ENCODE measurements at regions of chr1 and their contacts with region 1.

Region 1: DNA sequence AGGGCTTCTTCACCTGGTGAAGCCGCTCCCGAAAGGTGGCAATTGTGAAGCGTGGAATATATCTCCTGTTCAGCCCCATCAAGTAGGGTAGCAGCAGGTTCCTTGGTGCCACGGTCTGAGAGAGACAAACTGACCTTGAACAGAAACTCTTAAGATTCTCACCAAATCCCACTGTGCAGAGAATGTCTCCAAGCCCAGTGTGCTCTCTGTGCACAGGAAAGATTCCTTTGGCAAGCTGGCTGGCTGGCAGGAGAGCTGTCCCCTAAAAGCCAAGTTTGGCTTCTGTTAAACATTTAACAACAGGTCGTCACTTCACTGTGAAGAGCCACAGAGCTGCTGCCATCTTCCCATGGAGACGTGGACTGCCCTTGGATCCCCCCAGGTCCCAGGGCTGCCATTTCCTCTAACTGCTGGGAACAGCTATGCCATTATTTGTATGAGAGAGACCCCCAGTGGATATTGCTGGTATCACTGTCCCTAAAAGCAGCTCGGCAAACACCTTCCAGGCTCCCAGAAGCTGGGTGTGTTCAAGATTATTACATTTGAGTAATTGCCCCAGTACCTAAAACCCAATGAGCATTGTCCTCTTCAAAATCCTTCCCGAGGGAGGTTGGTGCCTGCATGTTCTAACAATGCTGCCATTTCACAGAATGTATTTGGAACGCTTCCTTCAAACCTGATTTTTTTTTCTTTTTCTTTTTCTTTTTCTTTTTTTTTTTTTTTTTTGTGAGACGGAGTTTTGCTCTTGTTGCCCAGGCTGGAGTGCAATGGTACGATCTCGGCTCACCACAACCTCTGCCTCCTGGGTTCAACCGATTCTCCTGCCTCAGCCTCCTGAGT is 71.8 kb downstream of the CD58 start:
- DNase-seq: peak; percentile 78
- ATAC-seq: peak; percentile 94
- H3K4me3 ChIP-seq: no peak overlapping the region
- H3K27ac ChIP-seq: no peak overlapping the region
- H3K4me1 ChIP-seq: peaks cover 18% of the 10 kb centered on the region
- H3K27me3 ChIP-seq: no peaks in the 10 kb centered on the region
- CTCF ChIP-seq: peak; percentile 92

Region 2: GRCh38 chr1:116139592-116140134 is 359.3 kb before region 1 on chr1:
- CTCF ChIA-PET with region 1: interaction called, 46 read pairs
- POLR2A ChIA-PET with region 1: no interaction called
- intact Hi-C with region 1: loop called (anchors 1 kb)
- DNase-seq: no peak
- ATAC-seq: no peak
- H3K4me3 ChIP-seq: no peak overlapping the region
- H3K27ac ChIP-seq: no peak overlapping the region
- H3K4me1 ChIP-seq: peaks cover 5% of the 10 kb centered on the region; the same call in 1 of the 2 replicates
- H3K27me3 ChIP-seq: no peaks in the 10 kb centered on the region
- CTCF ChIP-seq: no peak

Region 3: DNA sequence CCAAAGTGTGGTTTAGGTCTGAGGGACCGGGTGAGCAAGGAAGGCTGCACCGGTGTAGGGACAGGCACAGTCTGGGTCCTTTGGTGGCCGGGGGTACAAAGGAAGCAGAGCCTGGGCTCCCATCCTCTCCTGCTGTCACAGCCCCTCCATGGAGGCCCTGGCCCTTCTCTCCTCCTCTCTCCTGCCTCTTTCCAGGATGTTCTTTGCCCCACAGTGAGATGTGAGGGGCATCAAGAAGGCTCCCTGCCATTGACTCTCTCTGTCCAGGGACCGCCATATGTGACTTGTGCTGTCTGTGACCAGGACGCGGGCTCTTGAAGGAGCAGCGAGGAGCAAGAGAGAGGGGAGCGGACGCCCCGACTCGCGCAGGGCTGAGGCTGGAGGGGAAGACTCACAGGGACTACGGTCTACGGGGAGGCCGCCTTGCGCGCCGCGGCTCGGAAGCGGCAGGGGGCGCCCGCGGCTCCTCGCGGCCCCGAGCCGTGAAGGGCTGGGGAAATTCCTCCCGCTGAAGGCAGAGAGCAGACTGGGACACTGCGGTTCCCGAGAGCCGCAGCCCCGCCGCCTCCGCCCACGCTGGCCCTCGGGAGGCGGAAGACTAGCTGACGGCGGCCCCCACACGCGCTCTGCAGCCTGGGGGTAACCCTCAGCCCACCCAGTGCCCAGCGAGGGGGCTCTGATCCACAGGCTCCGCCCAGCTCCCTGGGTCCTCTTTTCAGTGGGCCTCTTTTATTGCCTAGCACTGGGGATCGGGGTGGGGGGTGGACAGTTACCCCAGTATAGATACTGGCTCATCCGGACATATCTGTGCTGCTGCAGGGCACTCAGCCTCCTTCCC is 347.1 kb before region 1 on chr1:
- CTCF ChIA-PET with region 1: interaction called, 4 read pairs
- POLR2A ChIA-PET with region 1: no interaction called
- intact Hi-C with region 1: loop called (anchors 1 kb)
- DNase-seq: peak; percentile 84
- ATAC-seq: peak; percentile 100
- H3K4me3 ChIP-seq: peak overlapping the region; percentile 78
- H3K27ac ChIP-seq: no peak overlapping the region
- H3K4me1 ChIP-seq: peaks cover 3% of the 10 kb centered on the region; the same call in 1 of the 2 replicates
- H3K27me3 ChIP-seq: no peaks in the 10 kb centered on the region
- CTCF ChIP-seq: peak; percentile 81

Region 4: DNA sequence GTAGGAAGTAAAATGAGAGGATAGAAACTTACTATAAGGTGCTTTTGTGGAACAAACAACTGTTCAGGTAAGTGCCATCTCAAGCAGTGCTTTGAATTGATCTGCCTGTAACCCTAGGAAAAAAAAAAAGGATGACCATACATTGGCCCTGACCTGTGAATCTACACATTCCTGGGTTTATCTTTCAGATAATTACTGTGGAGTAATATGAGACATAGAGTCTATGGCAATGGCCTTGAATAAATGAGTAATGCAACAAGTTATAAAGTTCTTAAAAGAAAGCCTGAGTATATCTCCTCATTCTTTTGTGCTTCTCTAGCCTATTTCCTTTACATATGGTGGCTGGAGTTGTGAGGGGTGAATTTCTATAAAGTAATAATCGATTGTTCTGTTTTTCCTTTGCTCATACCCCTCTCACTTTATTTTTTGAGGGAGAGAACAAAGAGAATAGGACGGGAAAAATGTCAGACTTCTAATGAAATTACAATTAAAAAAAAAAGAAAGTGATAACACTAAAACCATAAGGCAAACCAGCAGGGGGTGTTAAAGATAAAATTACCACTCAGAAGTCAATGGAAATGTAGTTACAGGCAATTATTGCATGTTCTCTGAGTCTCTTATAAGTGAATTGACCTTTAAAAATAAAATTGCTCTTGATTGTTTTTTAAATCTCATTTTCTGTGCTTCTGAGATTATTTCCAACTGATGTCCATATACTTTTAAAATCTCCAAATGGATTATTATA is 138.4 kb before region 1 on chr1:
- CTCF ChIA-PET with region 1: no interaction called
- POLR2A ChIA-PET with region 1: no interaction called
- intact Hi-C with region 1: loop called (anchors 1 kb)
- DNase-seq: peak; percentile 41
- ATAC-seq: no peak
- H3K4me3 ChIP-seq: no peak overlapping the region
- H3K27ac ChIP-seq: no peak overlapping the region
- H3K4me1 ChIP-seq: peaks cover 43% of the 10 kb centered on the region
- H3K27me3 ChIP-seq: no peaks in the 10 kb centered on the region
- CTCF ChIP-seq: peak; percentile 56

Region 5: DNA sequence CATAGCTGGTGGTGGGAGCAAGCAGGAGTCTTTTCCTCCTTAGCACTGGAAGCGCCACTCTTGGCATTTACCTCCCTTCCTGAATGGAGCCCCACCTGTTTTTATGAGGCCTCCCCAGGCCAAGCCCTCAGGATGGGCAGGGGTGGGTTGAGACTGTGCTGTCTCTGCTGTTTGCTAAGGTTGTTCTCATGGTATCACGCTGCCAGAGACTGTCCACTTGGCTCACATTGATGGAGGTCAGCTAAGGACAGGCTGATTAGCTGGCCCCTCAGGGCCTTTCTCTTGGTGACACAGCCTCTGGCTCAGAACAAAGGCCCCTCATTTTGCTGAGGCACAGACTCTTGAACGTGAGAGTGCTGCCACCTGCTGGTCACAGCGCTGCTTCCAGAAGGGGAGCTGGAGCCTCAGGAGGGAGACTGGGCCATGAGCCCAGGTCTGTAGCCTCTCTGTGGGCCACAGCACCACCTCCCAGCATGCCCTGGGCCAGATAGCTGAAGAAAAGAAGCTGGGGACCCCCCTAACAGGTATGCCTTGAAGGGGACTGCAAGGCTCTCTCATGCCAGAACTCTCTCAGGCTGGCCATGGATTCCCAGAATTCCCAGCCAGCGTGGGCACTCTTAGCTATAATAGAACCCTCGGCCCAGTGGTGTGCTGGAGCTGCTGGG is 13.8 kb before region 1 on chr1:
- CTCF ChIA-PET with region 1: interaction called, 16 read pairs
- POLR2A ChIA-PET with region 1: no interaction called
- intact Hi-C with region 1: no loop called
- DNase-seq: peak; percentile 94
- ATAC-seq: peak; percentile 60
- H3K4me3 ChIP-seq: no peak overlapping the region
- H3K27ac ChIP-seq: peak overlapping the region; percentile 92; the same call in 1 of the 2 replicates
- H3K4me1 ChIP-seq: peaks cover 55% of the 10 kb centered on the region
- H3K27me3 ChIP-seq: no peaks in the 10 kb centered on the region
- CTCF ChIP-seq: peak; percentile 98

Region 6: DNA sequence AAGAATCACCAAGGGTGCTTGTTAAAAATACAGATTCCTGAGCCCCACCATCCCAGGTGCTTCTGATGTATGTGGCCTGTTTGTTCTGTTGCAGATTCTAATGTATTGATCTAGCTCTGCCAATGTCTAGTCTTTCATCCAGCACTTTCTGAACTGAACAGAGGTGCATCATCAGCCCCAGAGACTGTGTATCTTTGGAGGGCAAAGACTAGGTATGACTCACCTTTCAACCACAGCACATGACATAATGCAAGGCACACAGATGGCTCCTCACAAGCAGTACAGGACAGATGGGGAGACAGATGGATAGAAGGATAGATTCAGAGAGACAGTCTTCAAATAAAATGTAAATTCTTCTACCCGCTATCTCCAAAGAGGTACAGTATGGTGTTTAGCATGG is 39.5 kb after region 1 on chr1:
- CTCF ChIA-PET with region 1: interaction called, 15 read pairs
- POLR2A ChIA-PET with region 1: no interaction called
- intact Hi-C with region 1: no loop called
- DNase-seq: peak; percentile 78
- ATAC-seq: peak; percentile 73
- H3K4me3 ChIP-seq: no peak overlapping the region
- H3K27ac ChIP-seq: peak overlapping the region; percentile 91
- H3K4me1 ChIP-seq: peaks cover 41% of the 10 kb centered on the region
- H3K27me3 ChIP-seq: no peaks in the 10 kb centered on the region
- CTCF ChIP-seq: no peak

Region 7: DNA sequence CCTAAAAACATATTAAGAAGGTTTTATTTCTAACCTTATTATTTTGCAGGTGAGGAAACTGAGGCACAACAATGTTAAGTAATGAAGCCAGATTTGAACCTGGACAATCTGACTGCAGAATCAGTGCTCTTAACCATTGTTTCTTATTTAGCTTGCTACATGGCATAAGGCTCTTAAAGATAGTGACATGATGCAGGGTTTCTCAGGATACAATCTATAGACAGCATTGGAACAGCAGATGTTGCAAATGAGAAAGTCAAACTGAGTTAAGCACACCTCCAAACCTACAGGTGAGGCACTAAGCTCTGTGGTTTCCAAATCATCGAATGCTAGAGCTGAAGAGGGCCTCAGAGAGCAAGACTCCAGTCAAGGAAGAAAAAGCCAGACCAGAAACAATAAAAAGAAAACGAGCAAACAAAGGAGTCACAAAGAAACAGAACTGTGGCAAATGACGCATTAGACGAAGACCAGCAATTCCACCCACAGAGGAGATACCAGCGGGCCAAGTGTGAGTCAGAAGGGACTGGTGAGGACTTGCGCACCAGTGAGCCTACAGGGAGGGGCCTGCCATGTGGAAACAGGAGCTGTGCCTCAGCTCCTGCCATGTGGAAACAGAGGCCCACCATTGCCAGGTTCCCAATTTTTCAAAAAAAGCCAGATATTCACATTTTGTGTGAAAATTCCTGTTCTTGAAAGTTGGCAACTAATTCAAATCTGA is 57.4 kb after region 1 on chr1:
- CTCF ChIA-PET with region 1: no interaction called
- POLR2A ChIA-PET with region 1: no interaction called
- intact Hi-C with region 1: loop called (anchors 2 kb)
- DNase-seq: peak; percentile 98
- ATAC-seq: peak; percentile 99
- H3K4me3 ChIP-seq: no peak overlapping the region
- H3K27ac ChIP-seq: peak overlapping the region; percentile 94
- H3K4me1 ChIP-seq: peaks cover 34% of the 10 kb centered on the region
- H3K27me3 ChIP-seq: no peaks in the 10 kb centered on the region
- CTCF ChIP-seq: peak; percentile 50

Measured in PC-3 (cell line).